ENCODE measurements at regions of chr16 and their contacts with region 1.

Region 1: GRCh38 chr16:89860747-89861304 is 12.6 kb upstream of the TCF25 start:
- DNase-seq: peak; percentile 89
- H3K4me3 Mint-ChIP-seq: no peak overlapping the region
- H3K27ac Mint-ChIP-seq: no peak overlapping the region
- H3K4me1 Mint-ChIP-seq: no peaks in the 10 kb centered on the region
- H3K27me3 Mint-ChIP-seq: no peaks in the 10 kb centered on the region
- CTCF ChIP-seq: peak; percentile 100

Region 2: DNA sequence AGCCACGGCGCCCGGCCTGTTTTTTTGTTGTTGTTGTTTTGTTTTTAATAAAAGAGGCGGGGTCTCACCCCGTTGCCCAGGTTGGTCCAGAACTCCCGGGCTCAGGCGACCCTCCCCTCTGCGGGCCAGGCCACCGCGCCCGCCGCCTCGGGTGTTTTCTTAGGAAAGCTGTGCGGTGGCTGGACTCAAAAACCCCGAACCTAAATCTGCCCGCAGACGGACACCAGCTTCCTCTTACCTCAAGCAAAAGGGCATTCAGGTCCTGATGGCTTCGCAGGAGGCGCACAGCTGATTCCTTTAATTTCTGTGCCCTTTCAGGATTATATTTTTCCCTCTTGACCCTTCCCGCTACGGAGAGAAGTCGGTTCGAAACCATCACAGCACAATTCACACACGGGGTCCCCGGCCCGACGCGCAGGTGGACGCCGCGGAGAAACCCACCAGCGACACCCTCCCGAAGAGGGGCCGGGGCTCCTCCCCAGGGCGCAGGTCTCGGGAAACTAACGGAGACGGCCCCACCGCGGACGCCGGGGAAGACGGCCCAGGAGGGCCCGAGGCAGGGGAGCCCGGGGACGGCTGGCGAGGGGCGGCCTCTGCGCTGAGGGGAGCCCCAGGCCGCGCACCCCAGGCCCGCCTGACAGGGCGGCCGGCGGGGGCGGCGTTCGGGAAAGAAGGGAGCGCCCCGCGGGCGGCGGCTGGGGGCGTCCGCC is 45.0 kb before region 1 on chr16:
- CTCF ChIA-PET with region 1: interaction called, 4 read pairs
- intact Hi-C with region 1: loop called (anchors 2 kb)
- DNase-seq: peak; percentile 24
- H3K4me3 Mint-ChIP-seq: peak overlapping the region; percentile 85
- H3K27ac Mint-ChIP-seq: no peak overlapping the region
- H3K4me1 Mint-ChIP-seq: peaks cover 27% of the 10 kb centered on the region
- H3K27me3 Mint-ChIP-seq: no peaks in the 10 kb centered on the region
- CTCF ChIP-seq: no peak

Region 3: GRCh38 chr16:89880477-89881367 is 19.9 kb after region 1 on chr16:
- CTCF ChIA-PET with region 1: no interaction called
- intact Hi-C with region 1: no loop called
- DNase-seq: no peak
- H3K4me3 Mint-ChIP-seq: no peak overlapping the region
- H3K27ac Mint-ChIP-seq: no peak overlapping the region
- H3K4me1 Mint-ChIP-seq: no peaks in the 10 kb centered on the region
- H3K27me3 Mint-ChIP-seq: no peaks in the 10 kb centered on the region
- CTCF ChIP-seq: no peak